PC-9 (cell line): ENCODE measurements at regions of chr5 and their contacts with region 1.

Region 1: DNA sequence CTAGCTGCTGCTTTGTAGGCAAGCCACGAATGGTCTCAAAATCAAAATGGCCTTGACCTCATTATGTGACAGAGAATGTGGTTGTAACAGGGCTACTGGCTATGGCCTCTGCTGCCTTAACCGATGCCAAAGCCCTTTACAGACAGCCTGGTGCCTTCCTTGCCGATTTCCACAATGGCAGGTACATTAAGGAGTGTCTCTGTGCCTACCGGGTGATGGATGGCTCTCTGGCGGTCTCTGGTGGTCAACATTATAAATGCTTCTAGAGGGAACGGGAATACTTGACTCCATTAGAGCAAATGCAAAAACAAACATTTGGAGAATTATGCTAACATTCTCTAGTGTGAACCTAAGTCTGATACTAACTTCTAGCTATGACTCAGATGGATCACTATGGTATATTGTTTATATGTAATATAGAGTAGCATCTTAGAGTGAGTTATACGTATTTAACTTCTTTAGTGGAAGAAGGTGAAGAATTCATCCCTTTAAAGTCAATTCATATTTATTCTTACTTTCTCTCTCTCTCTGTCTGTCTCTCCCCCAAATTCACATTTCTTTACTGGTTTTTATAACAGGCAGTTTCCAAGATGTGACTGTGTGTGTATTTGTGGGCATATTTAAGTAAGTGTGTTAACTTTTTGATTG is 52.5 kb downstream of the RPS23 start:
- DNase-seq: peak in 1 of 2 experiments; percentile 49
- H3K4me3 ChIP-seq: no peak overlapping the region
- H3K27ac ChIP-seq: no peak overlapping the region
- H3K4me1 ChIP-seq: no peaks in the 10 kb centered on the region
- H3K27me3 ChIP-seq: no peaks in the 10 kb centered on the region
- CTCF ChIP-seq: peak; percentile 88

Region 2: DNA sequence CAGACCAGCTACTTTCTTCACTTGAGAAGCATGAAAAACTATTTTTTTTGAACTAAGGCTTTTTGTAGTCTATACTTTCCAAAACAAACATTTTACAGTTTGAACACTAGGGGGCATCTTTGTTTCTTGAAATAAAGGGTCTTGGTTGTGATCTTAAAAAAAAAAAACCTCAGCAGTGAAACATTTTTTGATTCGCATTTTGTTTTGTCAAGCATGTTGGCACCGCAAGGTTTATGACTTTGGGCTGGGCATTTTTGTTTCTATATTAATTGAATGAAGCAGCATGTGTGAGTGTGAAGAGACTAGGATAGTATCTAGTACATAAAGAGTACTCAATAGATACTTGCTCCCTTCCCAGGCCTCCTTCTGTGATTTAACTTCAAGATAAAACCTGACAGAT is 800.1 kb before region 1 on chr5:
- CTCF ChIA-PET with region 1: interaction called, 3 read pairs
- POLR2A ChIA-PET with region 1: no interaction called
- intact Hi-C with region 1: loop called (anchors 1 kb)
- DNase-seq: peak; percentile 2 to 55
- H3K4me3 ChIP-seq: no peak overlapping the region
- H3K27ac ChIP-seq: no peak overlapping the region
- H3K4me1 ChIP-seq: peaks cover 35% of the 10 kb centered on the region
- H3K27me3 ChIP-seq: no peaks in the 10 kb centered on the region
- CTCF ChIP-seq: peak; percentile 83

Region 3: GRCh38 chr5:82107267-82107666 is 118.4 kb before region 1 on chr5:
- CTCF ChIA-PET with region 1: no interaction called
- POLR2A ChIA-PET with region 1: no interaction called
- intact Hi-C with region 1: loop called (anchors 10 kb)
- DNase-seq: no peak
- H3K4me3 ChIP-seq: no peak overlapping the region
- H3K27ac ChIP-seq: no peak overlapping the region
- H3K4me1 ChIP-seq: no peaks in the 10 kb centered on the region; the same call in 1 of the 2 replicates
- H3K27me3 ChIP-seq: no peaks in the 10 kb centered on the region
- CTCF ChIP-seq: peak; percentile 65

Region 4: DNA sequence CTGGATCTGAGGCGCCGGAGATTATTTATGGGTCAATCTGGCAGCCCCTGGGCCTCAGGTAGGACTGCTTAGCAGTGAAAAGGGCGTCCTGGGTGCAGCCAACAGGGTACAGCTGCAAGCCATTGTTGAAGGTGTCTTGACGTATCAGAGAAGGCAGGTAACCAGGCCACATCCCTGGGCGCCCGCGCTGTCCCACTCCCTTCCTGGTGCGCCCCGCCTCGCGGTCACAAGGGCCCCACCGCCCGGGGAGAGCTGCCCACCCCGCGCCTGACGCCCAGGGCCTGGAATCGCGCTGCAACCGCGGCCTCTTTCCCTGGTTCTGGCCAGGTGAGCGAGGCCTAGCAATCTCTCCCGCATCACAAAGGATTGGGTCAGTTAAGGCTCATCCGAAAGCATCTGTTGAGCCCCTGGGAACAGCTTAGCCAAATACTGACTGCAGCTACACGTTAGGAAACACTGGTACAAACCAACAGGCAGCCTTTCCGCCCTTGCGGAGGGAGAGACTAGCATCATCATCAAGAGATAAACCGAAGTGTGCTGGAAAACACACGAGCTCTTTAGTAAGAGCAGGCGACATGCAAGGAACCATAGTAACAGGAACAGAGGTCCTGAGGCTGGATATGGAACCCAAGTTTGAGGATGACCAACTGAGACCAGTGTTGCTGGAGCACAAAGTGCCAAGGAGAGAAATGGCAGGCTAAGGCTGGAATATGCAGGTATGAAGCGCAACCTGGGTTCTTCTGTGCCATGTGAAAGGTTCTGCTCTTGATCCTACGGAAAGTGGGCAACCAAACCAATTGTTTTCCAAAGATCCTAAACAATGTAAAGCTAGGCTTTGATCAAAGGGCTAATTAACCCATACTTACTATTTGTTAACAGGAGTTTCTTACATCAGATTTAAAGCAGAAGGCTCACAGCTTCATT is 49.0 kb after region 1 on chr5:
- CTCF ChIA-PET with region 1: no interaction called
- POLR2A ChIA-PET with region 1: no interaction called
- intact Hi-C with region 1: no loop called
- DNase-seq: no peak
- H3K4me3 ChIP-seq: no peak overlapping the region
- H3K27ac ChIP-seq: no peak overlapping the region
- H3K4me1 ChIP-seq: peaks cover 13% of the 10 kb centered on the region
- H3K27me3 ChIP-seq: no peaks in the 10 kb centered on the region
- CTCF ChIP-seq: no peak

Region 5: GRCh38 chr5:82312373-82312856 is 86.8 kb after region 1 on chr5:
- CTCF ChIA-PET with region 1: no interaction called
- POLR2A ChIA-PET with region 1: no interaction called
- intact Hi-C with region 1: no loop called
- DNase-seq: peak; percentile 42 to 55
- H3K4me3 ChIP-seq: no peak overlapping the region
- H3K27ac ChIP-seq: no peak overlapping the region
- H3K4me1 ChIP-seq: peaks cover 13% of the 10 kb centered on the region
- H3K27me3 ChIP-seq: no peaks in the 10 kb centered on the region
- CTCF ChIP-seq: peak; percentile 85

Region 6: DNA sequence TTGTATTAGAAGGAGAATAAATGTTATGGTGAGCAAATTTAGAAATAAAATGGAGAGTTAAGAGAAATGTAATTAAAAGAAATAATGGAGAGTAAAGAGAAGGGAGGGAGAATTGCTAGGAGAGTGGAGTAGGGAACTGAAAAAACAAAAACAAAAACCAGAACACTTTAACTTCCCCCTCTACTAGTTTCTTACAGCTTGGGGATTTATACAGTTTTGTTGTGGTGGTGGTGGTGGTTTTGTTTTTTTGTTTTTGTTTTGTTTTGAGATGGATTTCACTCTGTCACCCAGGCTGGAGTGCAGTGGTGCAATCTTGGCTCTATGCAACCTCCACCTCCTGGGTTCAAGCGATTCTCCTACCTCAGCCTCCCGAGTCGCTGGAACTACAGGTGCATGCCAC is 529.1 kb after region 1 on chr5:
- CTCF ChIA-PET with region 1: no interaction called
- POLR2A ChIA-PET with region 1: no interaction called
- intact Hi-C with region 1: no loop called
- DNase-seq: no peak
- H3K4me3 ChIP-seq: no peak overlapping the region
- H3K27ac ChIP-seq: no peak overlapping the region
- H3K4me1 ChIP-seq: no peaks in the 10 kb centered on the region
- H3K27me3 ChIP-seq: no peaks in the 10 kb centered on the region
- CTCF ChIP-seq: no peak